Activated T-helper 2 cell treated with anti-CD3 and anti-CD28 coated beads, Interferon-gamma antibody, Interleukin-2, Interleukin-4, amounts not matched to agents 10 μg/mL and 5 μg/mL and 100 μg/mL, durations not matched to agents 14 hours and 24 hours and 36 hours (primary cell): ENCODE measurements at regions of chr1 and their contacts with region 1.

Region 1: GRCh38 chr1:92476071-92476631 is 10.6 kb downstream of the GFI1 start:
- DNase-seq: peak; percentile 62
- H3K4me3 Mint-ChIP-seq: peak overlapping the region; percentile 70
- H3K27ac Mint-ChIP-seq: peak overlapping the region; percentile 91
- H3K4me1 Mint-ChIP-seq: peaks cover 78% of the 10 kb centered on the region
- H3K27me3 Mint-ChIP-seq: no peaks in the 10 kb centered on the region

Region 2: GRCh38 chr1:92317836-92318493 is 158.2 kb before region 1 on chr1:
- intact Hi-C with region 1: loop called (anchors 2 kb)
- DNase-seq: peak; percentile 23
- H3K4me3 Mint-ChIP-seq: peak overlapping the region; percentile 49
- H3K27ac Mint-ChIP-seq: peak overlapping the region; percentile 72
- H3K4me1 Mint-ChIP-seq: peaks cover 55% of the 10 kb centered on the region
- H3K27me3 Mint-ChIP-seq: no peaks in the 10 kb centered on the region